ENCODE measurements at regions of chr11 and their contacts with region 1.

Region 1: GRCh38 chr11:75142714-75143419 is 8.0 kb upstream of the SLCO2B1 start:
- DNase-seq: peak; percentile 89
- ATAC-seq: peak; percentile 82

Region 2: GRCh38 chr11:74929431-74930363 is 213.2 kb before region 1 on chr11:
- intact Hi-C with region 1: loop called (anchors 5 kb)
- DNase-seq: peak; percentile 46
- ATAC-seq: peak; percentile 87

Region 3: GRCh38 chr11:75204685-75205563 is 62.1 kb after region 1 on chr11:
- intact Hi-C with region 1: loop called (anchors 1 kb)
- DNase-seq: peak; percentile 95
- ATAC-seq: peak; percentile 94

Region 4: DNA sequence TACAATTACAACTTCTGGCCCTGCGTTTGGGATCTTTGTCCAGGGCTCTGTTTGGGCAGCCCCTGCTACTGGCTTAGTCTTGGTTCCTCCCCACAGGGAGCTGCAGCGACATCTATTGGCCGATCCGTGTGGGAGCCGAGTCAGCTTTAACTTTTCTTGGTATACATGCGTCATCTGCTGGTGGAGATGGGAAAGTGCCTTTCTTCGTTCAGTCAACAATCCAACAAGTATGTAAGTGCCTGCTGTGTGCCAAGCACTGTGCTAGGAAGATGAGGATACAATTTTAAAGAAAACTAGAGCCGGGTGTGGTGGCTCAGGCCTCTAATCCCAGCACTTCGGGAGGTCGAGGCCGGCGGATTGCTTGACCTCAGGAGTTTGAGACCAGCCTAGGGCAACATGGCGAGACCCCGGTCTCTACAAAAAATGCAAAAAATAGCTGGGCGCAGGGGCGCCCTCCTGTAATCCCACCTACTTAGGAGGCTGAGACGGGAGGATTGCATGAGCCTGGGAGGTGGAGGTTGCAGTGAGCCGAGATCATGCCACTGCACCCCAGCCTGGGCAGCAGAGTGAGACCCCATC is 105.9 kb after region 1 on chr11:
- intact Hi-C with region 1: loop called (anchors 2 kb)
- DNase-seq: peak; percentile 92
- ATAC-seq: peak; percentile 98

Region 5: DNA sequence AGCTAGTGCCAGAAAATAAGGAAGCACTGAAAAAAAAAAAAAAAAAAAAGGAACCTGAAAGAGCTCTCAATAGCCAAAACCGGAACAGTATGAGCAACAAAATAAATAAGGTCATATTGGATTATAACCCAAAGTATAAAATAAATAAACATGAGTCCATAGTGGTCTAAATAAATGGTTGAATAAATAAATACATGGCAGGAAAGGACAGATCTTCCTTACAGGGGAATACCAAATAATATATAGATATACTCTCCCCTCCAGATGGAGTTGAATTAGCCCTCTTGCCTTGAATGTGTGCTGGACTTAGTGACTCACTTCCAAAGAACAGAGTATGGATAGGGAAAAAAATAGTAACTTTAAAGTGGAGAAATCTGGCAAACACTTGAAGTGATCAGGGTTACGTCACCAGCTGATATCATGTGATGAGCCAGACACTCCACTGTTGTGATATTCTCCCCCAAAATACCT is 222.9 kb after region 1 on chr11:
- intact Hi-C with region 1: no loop called
- DNase-seq: no peak
- ATAC-seq: no peak